MCF 10A (cell line): ENCODE measurements at regions of chr5 and their contacts with region 1.

Region 1: DNA sequence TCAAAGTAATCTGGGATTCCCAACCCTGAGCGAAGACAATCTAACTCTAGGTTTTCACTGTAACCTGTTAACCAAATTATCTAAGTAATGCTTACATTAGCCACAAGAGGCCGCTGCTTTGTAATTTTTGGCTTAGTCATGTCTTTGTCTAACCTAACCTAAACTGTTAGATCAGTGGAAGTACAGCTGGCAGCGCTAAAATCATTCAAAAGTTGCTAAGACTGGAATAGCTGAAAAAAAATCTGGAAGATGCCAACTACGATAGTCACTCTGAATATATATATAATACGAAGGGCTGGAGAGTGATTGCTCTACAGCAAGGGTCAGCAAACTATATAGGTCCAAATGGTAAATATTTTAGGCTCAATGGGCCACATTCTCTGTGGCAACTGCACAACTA is 60.2 kb downstream of the FBXO38 start:
- DNase-seq: peak; percentile 87
- H3K4me3 Mint-ChIP-seq: no peak overlapping the region
- H3K27ac Mint-ChIP-seq: no peak overlapping the region
- H3K4me1 Mint-ChIP-seq: no peaks in the 10 kb centered on the region
- H3K27me3 Mint-ChIP-seq: no peaks in the 10 kb centered on the region
- CTCF ChIP-seq: peak; percentile 74

Region 2: DNA sequence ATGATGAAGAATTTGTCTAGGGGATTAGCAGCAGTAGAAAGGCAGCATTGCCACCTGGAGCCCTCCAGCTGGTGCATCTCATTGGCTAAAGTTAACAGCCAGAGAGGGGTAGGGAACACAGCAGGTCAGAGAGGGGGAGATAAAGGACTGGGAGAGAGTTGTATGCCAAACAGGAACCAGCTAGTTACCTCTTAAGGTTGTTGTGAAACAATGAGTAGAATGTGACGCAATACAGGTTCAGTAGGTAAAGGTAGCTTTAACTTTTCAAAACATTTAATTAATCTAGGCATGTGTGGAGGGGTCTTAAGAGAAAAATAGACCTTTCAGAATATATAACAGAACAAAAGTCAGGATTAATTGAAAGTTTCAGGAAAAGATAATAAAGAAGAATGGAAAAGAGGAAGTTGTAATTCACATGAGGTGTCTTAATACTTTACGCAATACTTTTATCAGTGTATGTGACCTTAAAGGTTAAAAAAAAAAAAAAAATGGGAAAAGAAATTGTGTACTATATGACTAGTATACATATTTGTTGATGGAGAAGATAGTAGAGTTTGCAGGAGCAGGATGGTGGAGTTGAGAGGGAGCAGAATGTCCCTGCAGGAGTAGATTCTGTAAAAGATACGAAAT is 45.9 kb before region 1 on chr5:
- CTCF ChIA-PET with region 1: interaction called, 10 read pairs
- POLR2A ChIA-PET with region 1: no interaction called
- intact Hi-C with region 1: no loop called
- DNase-seq: peak; percentile 77
- H3K4me3 Mint-ChIP-seq: no peak overlapping the region
- H3K27ac Mint-ChIP-seq: peak overlapping the region; percentile 9
- H3K4me1 Mint-ChIP-seq: peaks cover 13% of the 10 kb centered on the region
- H3K27me3 Mint-ChIP-seq: no peaks in the 10 kb centered on the region
- CTCF ChIP-seq: no peak

Region 3: GRCh38 chr5:148425808-148426207 is 18.2 kb before region 1 on chr5:
- CTCF ChIA-PET with region 1: interaction called, 68 read pairs
- POLR2A ChIA-PET with region 1: no interaction called
- intact Hi-C with region 1: no loop called
- DNase-seq: no peak
- H3K4me3 Mint-ChIP-seq: no peak overlapping the region
- H3K27ac Mint-ChIP-seq: peak overlapping the region; percentile 2
- H3K4me1 Mint-ChIP-seq: no peaks in the 10 kb centered on the region
- H3K27me3 Mint-ChIP-seq: no peaks in the 10 kb centered on the region
- CTCF ChIP-seq: no peak

Region 4: DNA sequence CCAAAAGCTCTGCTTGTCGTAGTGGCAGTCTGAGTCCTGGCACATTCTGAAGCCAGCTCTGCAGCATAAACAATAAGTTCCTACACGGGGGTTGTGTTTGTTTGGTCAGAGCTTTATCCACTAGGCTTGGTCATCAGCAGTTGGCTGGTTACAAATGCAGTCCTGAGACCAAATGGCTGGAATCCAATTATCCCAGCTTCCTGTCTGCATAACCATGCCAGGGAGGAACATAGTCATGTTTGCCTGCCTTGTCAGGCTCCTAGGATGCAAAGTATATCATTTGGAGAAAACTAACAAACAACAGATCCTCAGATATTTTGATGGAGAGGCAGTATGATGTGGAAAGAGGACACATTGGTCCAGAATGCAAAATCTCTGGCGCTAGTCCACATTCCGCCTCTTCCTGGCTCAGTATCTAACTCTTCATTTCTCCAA is 25.5 kb after region 1 on chr5:
- CTCF ChIA-PET with region 1: interaction called, 11 read pairs
- POLR2A ChIA-PET with region 1: no interaction called
- intact Hi-C with region 1: no loop called
- DNase-seq: peak; percentile 75
- H3K4me3 Mint-ChIP-seq: no peak overlapping the region
- H3K27ac Mint-ChIP-seq: no peak overlapping the region
- H3K4me1 Mint-ChIP-seq: peaks cover 10% of the 10 kb centered on the region
- H3K27me3 Mint-ChIP-seq: no peaks in the 10 kb centered on the region
- CTCF ChIP-seq: no peak

Region 5: GRCh38 chr5:148697180-148697808 is 253.3 kb after region 1 on chr5:
- CTCF ChIA-PET with region 1: interaction called, 12 read pairs
- POLR2A ChIA-PET with region 1: no interaction called
- intact Hi-C with region 1: no loop called
- DNase-seq: peak; percentile 53
- H3K4me3 Mint-ChIP-seq: no peak overlapping the region
- H3K27ac Mint-ChIP-seq: no peak overlapping the region
- H3K4me1 Mint-ChIP-seq: no peaks in the 10 kb centered on the region
- H3K27me3 Mint-ChIP-seq: peaks cover 12% of the 10 kb centered on the region
- CTCF ChIP-seq: no peak